H1 (cell line): ENCODE measurements at regions of chr12 and their contacts with region 1.

Region 1: DNA sequence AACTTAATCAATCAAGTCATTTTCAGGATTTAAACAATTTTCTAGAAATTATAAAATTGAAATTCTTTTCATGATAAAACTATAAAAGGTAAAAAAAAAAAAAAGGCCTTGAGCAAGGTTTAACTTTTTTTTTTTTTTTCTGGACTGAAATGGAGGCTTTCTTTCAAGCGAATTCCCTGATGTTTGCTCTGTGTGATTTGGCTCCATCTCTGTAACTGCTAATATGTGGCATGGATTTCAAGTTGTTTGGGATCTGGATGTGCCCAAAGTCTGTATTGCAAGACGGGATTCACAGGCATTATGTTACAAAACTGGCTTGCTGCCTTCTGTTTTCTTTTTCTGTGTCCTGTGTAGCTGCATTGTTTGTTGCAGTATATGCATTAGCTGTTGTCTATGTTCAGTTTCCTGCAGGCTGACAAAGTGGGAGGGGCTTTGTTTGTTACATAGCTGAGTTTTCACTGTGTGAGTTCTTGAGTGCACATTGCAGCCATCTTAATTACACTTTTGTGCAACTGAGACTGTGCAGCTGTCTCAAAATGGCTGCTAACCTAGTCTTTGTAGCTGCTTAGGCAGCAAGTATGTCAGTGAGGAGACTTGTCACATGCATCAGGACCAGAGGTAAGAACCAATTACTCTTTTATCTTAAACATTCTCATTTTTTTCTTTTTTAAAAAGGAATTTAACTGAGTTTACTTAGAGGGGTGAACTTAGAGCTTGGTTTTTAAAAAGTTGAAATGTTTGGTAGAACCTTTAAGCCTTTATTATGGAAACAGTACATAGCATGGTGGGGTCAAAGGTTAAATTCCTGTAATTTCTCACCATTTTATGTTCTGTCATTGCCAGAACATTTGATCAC is 19.5 kb downstream of the ATF7IP start:
- DNase-seq: peak; percentile 33 to 63
- H3K4me3 ChIP-seq: peak overlapping the region in 3 of 4 experiments; percentile 3 to 49 (median 11); a peak in 4 of 8 replicates
- H3K27ac ChIP-seq: peak overlapping the region; percentile 68; the same call in 1 of the 2 replicates
- H3K4me1 ChIP-seq: peaks cover 0 to 34% (median 7%) of the 10 kb centered on the region in 4 experiments; a peak in 5 of 7 replicates
- H3K27me3 ChIP-seq: no peaks in the 10 kb centered on the region
- CTCF ChIP-seq: no peak
- EP300 ChIP-seq: no peak
- POLR2A ChIP-seq: no peak; a peak in 1 of 3 replicates
- RAD21 ChIP-seq: 0 out of 4 replicates have a peak, but pooled peaks of 1 of the 2 experiments have one; percentile 13

Region 2: DNA sequence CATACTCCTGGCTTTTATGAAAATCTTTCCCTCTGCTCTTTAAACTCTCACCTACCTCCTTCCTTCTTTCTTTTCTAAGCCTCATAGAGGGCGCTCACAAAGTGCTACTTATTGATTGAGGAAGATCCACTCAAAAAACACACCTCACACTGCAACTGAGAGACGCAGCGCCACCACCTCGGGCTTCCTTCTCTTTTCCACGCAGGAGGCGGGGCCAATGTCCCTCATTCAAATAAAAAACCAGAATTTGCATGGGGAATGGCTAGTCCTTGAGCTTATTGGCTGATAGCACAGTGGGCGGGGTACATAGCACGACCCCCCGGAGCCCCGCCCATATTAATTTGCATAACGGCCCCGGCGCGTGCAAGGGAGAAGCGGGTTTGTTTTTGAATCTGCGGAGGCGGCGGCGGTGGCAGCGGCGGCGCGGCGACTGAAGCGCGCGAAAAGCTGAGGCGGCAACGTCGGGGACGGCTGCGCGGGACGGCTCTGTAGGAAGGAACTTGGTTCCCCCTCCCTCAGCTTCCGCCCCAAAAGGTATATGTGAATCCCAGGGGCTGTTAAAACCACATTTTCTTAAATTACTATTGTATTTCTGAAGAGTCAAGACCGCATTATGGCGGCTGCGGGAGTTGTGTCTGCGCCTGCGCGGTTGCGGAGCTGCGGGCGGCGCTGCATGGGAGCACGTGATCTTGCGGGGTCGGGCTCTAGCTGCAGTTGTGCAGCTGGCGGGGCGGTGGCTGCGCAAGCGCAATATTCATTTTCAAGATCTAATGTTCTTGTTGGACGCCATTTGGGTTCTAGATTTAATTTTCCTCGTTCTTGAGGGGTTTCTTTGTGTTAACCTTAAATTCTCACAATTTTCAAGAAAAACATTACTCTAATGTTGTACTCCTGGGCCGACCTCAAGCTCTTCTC is 19.5 kb before region 1 on chr12 and contains the start of gene ATF7IP:
- CTCF ChIA-PET with region 1: interaction called, 9 read pairs
- POLR2A ChIA-PET with region 1: interaction called, 27 read pairs
- DNase-seq: peak; percentile 88 to 93
- H3K4me3 ChIP-seq: peak within 1 kb of the TSS; percentile 65 to 90 (median 73)
- H3K27ac ChIP-seq: peak within 1 kb of the TSS; percentile 91
- H3K4me1 ChIP-seq: peaks cover 0 to under 1% (median 0%) of the 10 kb centered on the region in 4 experiments; a peak in 1 of 7 replicates
- H3K27me3 ChIP-seq: no peaks in the 10 kb centered on the region
- CTCF ChIP-seq: peak in 1 of 3 experiments; percentile 17; a peak in 2 of 4 replicates
- EP300 ChIP-seq: peak in 1 of 2 experiments; percentile 66; a peak in 1 of 3 replicates
- POLR2A ChIP-seq: peak; percentile 93 to 98
- RAD21 ChIP-seq: peak; percentile 19 to 26; a peak in 2 of 4 replicates
- total RNA-seq, gene ATF7IP: 148 and 149 TPM in 2 replicates

Region 3: DNA sequence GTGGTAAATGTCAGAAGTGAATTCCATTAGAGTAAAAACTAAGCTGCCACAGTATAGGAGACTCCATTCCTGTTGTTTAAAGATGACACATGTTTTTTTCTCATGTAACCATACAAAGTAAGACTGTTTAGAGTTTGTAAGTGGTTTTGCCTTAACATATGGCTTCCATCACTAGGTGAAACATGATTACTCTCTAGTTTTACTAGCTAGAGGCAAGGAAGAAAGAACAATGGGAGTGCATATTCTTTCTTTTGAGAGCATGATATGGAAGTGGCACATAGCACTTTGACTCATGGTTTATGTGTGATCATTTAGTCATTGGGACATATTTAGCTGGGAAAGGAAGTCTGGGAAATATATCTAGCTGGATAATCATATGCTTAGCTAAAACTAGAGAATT is 11.8 kb before region 1 on chr12:
- CTCF ChIA-PET with region 1: interaction called, 9 read pairs
- POLR2A ChIA-PET with region 1: interaction called, 27 read pairs
- DNase-seq: no peak
- H3K4me3 ChIP-seq: no peak overlapping the region
- H3K27ac ChIP-seq: no peak overlapping the region
- H3K4me1 ChIP-seq: peaks cover 0 to 10% (median 2%) of the 10 kb centered on the region in 4 experiments; a peak in 2 of 7 replicates
- H3K27me3 ChIP-seq: no peaks in the 10 kb centered on the region
- CTCF ChIP-seq: no peak
- EP300 ChIP-seq: no peak
- POLR2A ChIP-seq: no peak
- RAD21 ChIP-seq: no peak